Mammary epithelial cell (primary cell): ENCODE measurements at regions of chr4 and their contacts with region 1.

Region 1: DNA sequence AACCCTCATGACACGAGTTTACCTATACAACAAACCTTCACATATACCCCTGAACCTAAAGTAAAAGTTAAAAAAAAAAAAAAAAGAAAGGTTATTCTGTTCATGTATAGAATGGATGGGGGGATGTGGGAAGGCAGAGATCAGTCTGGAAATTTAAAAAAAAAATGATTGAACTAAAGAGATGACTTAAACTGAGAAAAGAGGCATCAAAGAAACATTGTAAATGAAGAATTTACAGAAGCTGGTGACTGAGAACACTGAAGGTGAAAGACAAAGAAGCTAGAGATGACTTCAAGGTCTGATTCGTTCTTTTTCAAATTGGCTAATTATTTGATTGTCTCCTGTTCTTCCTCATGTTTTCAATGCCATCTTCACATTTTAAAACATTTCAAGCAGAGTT is 12.8 kb upstream of the ABCG2 start:
- DNase-seq: no peak
- H3K4me3 ChIP-seq: no peak overlapping the region
- H3K27ac ChIP-seq: no peak overlapping the region
- H3K4me1 ChIP-seq: no peaks in the 10 kb centered on the region
- H3K27me3 ChIP-seq: no peaks in the 10 kb centered on the region
- CTCF ChIP-seq: no peak

Region 2: DNA sequence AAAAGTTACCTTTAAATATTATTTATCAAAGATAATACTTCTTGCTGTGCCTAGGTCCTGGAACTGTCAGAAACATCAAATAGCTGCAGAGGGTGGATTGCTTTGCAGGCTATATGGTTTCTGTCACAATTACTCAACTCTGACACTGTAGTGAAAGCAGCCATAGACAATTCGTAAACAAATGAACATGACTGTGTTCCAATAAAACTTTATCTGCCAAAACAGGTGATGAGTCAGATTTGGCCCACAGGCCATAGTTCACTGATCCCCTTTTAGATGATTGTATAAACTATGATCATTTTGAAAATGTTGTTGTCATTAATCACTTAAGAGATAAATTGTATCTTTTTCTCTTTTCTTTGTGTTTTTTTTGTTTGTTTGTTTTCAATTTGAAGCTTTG is 346.9 kb before region 1 on chr4:
- CTCF ChIA-PET with region 1: no interaction called
- dilution Hi-C with region 1: no loop called
- in situ Hi-C with region 1: no loop called
- intact Hi-C with region 1: no loop called
- DNase-seq: no peak
- H3K4me3 ChIP-seq: no peak overlapping the region
- H3K27ac ChIP-seq: no peak overlapping the region
- H3K4me1 ChIP-seq: peaks cover 7% of the 10 kb centered on the region
- H3K27me3 ChIP-seq: no peaks in the 10 kb centered on the region
- CTCF ChIP-seq: no peak

Region 3: DNA sequence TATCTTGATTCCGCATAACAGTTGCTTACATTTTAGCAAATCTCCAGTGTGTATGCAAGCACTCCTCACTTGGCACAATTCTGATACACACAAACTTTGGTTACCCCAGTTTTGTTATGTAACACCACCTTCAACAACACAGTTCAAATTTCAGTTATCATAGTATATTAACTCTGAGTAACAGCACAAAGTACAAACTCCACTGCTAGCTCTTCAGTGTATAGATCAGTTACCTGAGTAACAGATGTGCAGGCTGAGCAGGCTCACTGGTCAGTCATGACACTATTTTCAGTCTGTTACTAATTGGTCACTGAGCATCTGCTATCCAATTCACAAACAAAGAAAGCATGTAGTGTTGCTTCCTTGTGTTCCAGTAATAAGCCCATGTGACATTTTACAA is 108.4 kb before region 1 on chr4:
- CTCF ChIA-PET with region 1: no interaction called
- dilution Hi-C with region 1: loop called (anchors 5 kb)
- in situ Hi-C with region 1: no loop called
- intact Hi-C with region 1: no loop called
- DNase-seq: no peak
- H3K4me3 ChIP-seq: no peak overlapping the region
- H3K27ac ChIP-seq: no peak overlapping the region
- H3K4me1 ChIP-seq: no peaks in the 10 kb centered on the region
- H3K27me3 ChIP-seq: no peaks in the 10 kb centered on the region
- CTCF ChIP-seq: no peak

Region 4: GRCh38 chr4:88097301-88097700 is 73.9 kb before region 1 on chr4:
- CTCF ChIA-PET with region 1: no interaction called
- dilution Hi-C with region 1: loop called (anchors 5 kb)
- in situ Hi-C with region 1: no loop called
- intact Hi-C with region 1: no loop called
- DNase-seq: no peak
- H3K4me3 ChIP-seq: no peak overlapping the region
- H3K27ac ChIP-seq: no peak overlapping the region
- H3K4me1 ChIP-seq: no peaks in the 10 kb centered on the region
- H3K27me3 ChIP-seq: no peaks in the 10 kb centered on the region
- CTCF ChIP-seq: no peak

Region 5: GRCh38 chr4:88143504-88143903 is 27.7 kb before region 1 on chr4:
- CTCF ChIA-PET with region 1: no interaction called
- dilution Hi-C with region 1: no loop called
- in situ Hi-C with region 1: no loop called
- intact Hi-C with region 1: no loop called
- DNase-seq: peak; percentile 95
- H3K4me3 ChIP-seq: peak overlapping the region in 2 of 3 experiments; percentile 10 to 27
- H3K27ac ChIP-seq: peak overlapping the region; percentile 35
- H3K4me1 ChIP-seq: peaks cover 29% of the 10 kb centered on the region
- H3K27me3 ChIP-seq: no peaks in the 10 kb centered on the region
- CTCF ChIP-seq: no peak